AG04450 (cell line): ENCODE measurements at regions of chr12 and their contacts with region 1.

Region 1: DNA sequence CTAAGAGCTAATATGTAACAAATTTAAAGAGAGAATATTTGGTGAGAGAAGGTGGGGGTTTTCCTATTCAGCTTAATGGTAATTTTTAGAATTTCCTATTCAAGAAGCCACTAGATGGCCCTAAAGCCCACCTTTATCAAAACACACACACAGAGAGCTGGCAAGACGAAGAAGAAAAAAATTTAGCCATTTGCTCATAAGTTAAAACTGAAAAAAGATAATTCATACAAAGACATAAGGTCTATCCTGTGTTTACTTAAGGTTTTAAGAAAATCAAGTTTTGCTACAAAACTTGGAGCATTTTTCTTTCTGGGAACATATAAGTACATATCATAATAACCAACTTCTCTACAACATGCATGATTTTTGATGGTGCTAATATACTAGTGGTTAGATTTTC is 46.8 kb upstream of the PCED1B start:
- DNase-seq: no peak
- H3K4me3 ChIP-seq: no peak overlapping the region
- H3K27ac ChIP-seq: no peak overlapping the region
- H3K27me3 ChIP-seq: no peaks in the 10 kb centered on the region
- CTCF ChIP-seq: peak; percentile 65

Region 2: DNA sequence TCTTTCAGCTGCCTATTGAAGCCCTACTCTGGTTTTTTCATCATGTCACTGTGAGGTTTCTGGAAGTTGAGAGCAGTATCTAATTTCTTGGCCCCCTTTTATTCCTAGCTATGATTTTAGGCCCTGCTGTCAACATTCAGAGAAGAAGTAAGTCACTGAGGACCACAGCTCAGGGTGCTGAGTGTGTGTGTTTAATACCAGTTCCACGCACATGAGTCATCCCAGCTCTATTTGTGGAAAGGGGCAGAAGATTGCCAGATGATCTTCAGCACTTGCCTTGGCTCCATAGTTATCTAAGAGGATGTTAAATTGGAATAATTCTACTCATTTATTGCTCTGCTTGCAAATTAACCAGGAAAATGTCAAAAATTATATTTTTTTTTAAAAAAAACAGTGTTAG is 141.3 kb before region 1 on chr12:
- CTCF ChIA-PET with region 1: no interaction called
- POLR2A ChIA-PET with region 1: no interaction called
- DNase-seq: no peak
- H3K4me3 ChIP-seq: no peak overlapping the region
- H3K27ac ChIP-seq: no peak overlapping the region
- H3K27me3 ChIP-seq: no peaks in the 10 kb centered on the region
- CTCF ChIP-seq: no peak

Region 3: DNA sequence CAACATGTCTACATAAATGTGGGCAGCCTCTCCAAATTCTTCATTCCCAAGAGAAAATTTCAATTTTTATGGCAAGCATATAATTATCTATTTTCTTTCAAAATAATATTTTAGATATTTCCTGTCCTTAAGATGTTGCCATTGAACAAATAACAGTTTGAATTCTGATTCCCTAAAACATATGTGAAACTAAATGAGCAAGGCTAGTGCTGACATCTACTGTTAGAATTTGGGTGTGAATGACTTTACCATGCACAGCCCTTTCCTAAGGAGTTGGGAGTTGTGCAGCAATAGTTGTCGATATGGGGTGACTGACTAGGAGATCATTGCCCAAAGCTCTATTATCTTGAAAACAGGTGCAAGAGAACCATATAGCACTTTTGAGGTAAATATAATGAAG is 98.7 kb before region 1 on chr12:
- CTCF ChIA-PET with region 1: interaction called, 10 read pairs
- POLR2A ChIA-PET with region 1: no interaction called
- DNase-seq: no peak
- H3K4me3 ChIP-seq: no peak overlapping the region
- H3K27ac ChIP-seq: no peak overlapping the region
- H3K27me3 ChIP-seq: no peaks in the 10 kb centered on the region
- CTCF ChIP-seq: peak; percentile 65

Region 4: GRCh38 chr12:47079468-47079980 is 46.9 kb after region 1 on chr12 and contains the starts of genes AMIGO2 and PCED1B:
- CTCF ChIA-PET with region 1: interaction called, 21 read pairs
- POLR2A ChIA-PET with region 1: no interaction called
- DNase-seq: no peak
- H3K4me3 ChIP-seq: peak within 1 kb of the TSS; percentile 80
- H3K27ac ChIP-seq: peak within 1 kb of the TSS; percentile 78
- H3K27me3 ChIP-seq: no peaks in the 10 kb centered on the region
- CTCF ChIP-seq: peak; percentile 54
- polyA plus RNA-seq, gene AMIGO2: 15.5 and 18.7 TPM in 2 replicates
- polyA plus RNA-seq, gene PCED1B: 0.88 and 1.1 TPM in 2 replicates

Region 5: DNA sequence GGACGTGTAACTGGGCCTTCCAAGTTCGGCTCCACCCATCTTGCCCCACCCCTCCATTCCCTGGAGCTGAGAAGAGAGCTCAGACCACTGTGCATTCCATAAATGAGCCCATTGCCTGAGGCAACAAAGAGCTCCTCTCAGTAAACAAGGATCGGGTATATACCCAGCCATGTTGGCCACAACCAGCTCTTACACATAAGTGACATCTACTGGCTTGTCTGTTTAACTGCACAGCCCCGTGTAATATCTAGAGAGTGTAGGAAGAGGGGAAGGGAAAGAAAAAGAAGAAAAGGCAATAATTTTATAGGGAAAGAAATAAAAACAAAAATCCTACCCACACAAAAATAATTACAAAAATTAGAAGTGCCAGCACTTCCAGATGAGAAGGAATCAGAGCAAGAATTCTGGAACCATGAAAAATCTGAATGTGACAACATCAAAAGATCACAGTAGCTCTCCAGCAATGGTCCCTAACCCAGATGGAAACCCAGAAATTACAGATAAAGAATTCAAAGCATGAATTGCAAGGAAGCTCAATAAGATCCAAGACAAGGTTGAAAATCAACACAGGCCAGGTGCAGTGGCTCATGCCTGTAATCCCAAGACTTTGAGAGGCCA is 365.1 kb after region 1 on chr12:
- CTCF ChIA-PET with region 1: interaction called, 56 read pairs
- POLR2A ChIA-PET with region 1: no interaction called
- DNase-seq: no peak
- H3K4me3 ChIP-seq: no peak overlapping the region
- H3K27ac ChIP-seq: no peak overlapping the region
- H3K27me3 ChIP-seq: no peaks in the 10 kb centered on the region
- CTCF ChIP-seq: peak; percentile 52

Region 6: DNA sequence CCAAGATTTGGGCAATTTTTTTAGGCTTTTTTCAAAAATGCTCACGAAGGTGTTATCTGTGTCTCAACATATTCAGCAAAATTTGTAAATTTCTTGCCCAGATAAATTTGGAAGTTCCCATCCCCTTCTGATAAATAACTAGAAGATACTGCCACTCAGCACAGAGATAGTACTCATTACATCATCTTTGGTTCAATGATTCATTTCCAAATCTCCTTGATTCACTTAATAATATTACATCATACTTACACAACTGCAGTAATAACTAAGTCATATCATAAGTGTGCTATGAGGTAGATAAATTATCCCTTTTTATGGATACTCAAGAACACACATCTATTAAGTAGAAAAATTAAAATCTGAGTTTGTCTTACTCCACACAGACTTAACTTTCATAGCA is 583.8 kb after region 1 on chr12:
- CTCF ChIA-PET with region 1: no interaction called
- POLR2A ChIA-PET with region 1: no interaction called
- DNase-seq: no peak
- H3K4me3 ChIP-seq: no peak overlapping the region
- H3K27ac ChIP-seq: no peak overlapping the region
- H3K27me3 ChIP-seq: no peaks in the 10 kb centered on the region
- CTCF ChIP-seq: no peak

Region 7: DNA sequence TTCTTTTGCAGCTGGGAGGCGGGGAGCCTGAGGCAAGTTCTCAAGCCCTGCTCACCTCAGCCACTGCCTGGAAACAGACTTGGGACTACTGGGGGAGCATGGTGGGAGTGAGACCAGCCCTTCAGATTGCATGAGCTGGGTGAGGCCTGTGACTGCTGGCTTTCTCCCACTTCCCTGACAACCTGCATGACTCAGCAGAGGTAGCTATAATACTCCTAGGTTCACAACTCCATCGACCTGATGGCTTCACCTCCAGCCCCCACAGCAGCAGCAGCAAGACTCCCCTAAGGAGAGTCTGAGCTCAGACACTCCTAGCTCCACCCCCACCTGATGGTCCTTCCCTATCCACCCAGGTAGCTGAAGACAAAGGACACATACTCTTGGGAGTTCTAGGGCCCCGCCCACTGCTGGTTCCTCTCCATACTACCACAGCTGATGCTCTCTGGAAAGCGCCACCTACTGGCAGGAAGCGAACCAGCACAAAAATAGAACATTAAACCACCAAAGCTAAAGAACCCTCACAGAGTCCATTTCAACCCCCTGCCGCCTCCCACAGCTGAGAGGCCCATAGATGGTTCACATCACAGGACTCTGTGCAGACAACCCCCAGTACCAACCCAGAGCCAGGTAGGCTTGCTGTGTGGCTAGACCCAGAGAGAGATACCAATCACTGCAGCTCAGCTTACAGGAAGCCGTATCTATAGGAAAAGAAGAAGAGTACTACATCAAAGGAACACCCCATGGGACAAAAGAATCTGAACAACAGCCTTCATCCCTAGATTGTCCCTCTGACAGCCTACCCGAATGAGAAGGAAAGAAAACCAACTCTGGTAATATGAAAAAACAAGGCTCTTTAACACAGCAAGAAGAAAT is 604.5 kb after region 1 on chr12:
- CTCF ChIA-PET with region 1: interaction called, 11 read pairs
- POLR2A ChIA-PET with region 1: no interaction called
- DNase-seq: no peak
- H3K4me3 ChIP-seq: no peak overlapping the region
- H3K27ac ChIP-seq: no peak overlapping the region
- H3K27me3 ChIP-seq: no peaks in the 10 kb centered on the region
- CTCF ChIP-seq: peak; percentile 46